B cell (primary cell): ENCODE measurements at regions of chr12 and their contacts with region 1.

Region 1: GRCh38 chr12:110826592-110827200 is 20.1 kb upstream of the CCDC63 start:
- DNase-seq: peak; percentile 90
- ATAC-seq: peak; percentile 99
- H3K4me3 ChIP-seq: peak overlapping the region in 4 of 5 experiments; percentile 9 to 44 (median 28)
- H3K4me3 Mint-ChIP-seq: peak overlapping the region; percentile 72
- H3K27ac ChIP-seq: no peak overlapping the region
- H3K27ac Mint-ChIP-seq: no peak overlapping the region
- H3K4me1 ChIP-seq: peaks cover 6 to 7% of the 10 kb centered on the region in 2 donors
- H3K4me1 Mint-ChIP-seq: peaks cover 6% of the 10 kb centered on the region
- H3K27me3 ChIP-seq: no peaks in the 10 kb centered on the region
- H3K27me3 Mint-ChIP-seq: peaks cover 10% of the 10 kb centered on the region
- CTCF ChIP-seq: peak; percentile 80

Region 2: GRCh38 chr12:110468212-110469048 is 358.3 kb before region 1 on chr12 and contains the starts of genes FAM216A and GPN3:
- CTCF ChIA-PET with region 1: interaction called, 21 read pairs
- POLR2A ChIA-PET with region 1: no interaction called
- intact Hi-C with region 1: loop called (anchors 1 kb)
- DNase-seq: peak; percentile 97
- ATAC-seq: peak; percentile 91
- H3K4me3 ChIP-seq: peak within 1 kb of the TSS; percentile 72 to 100 (median 95)
- H3K4me3 Mint-ChIP-seq: peak within 1 kb of the TSS; percentile 100
- H3K27ac ChIP-seq: peak within 1 kb of the TSS; percentile 69 to 79
- H3K27ac Mint-ChIP-seq: peak within 1 kb of the TSS; percentile 98
- H3K4me1 ChIP-seq: peaks cover 22 to 24% of the 10 kb centered on the region in 2 donors
- H3K4me1 Mint-ChIP-seq: peaks cover 42% of the 10 kb centered on the region
- H3K27me3 ChIP-seq: no peaks in the 10 kb centered on the region
- H3K27me3 Mint-ChIP-seq: no peaks in the 10 kb centered on the region
- CTCF ChIP-seq: no peak
- total RNA-seq, gene FAM216A: 15.4 and 15.7 TPM in 2 replicates
- total RNA-seq, gene GPN3: 12.3 and 13.4 TPM in 2 replicates

Region 3: DNA sequence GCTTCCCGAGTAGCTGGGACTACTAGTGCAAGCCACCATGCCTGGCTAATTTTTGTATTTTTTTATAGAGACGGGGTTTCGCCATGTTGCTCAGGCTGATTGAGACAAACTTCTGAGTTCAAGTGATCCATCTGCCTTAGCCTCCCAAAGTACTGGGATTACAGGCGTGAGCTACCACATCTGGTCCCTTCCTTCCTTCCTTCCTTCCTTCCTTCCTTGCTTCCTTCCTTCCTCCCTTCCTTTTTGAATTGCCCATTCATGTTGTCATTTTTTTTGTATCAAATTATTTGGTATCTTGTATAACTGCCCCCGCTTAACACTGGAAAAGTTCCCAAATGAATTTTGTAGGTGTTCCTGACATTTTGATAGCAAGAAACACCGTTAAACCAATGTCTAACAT is 312.9 kb before region 1 on chr12:
- CTCF ChIA-PET with region 1: interaction called, 12 read pairs
- POLR2A ChIA-PET with region 1: no interaction called
- intact Hi-C with region 1: loop called (anchors 1 kb)
- DNase-seq: no peak
- ATAC-seq: no peak
- H3K4me3 ChIP-seq: no peak overlapping the region
- H3K4me3 Mint-ChIP-seq: no peak overlapping the region
- H3K27ac ChIP-seq: no peak overlapping the region
- H3K27ac Mint-ChIP-seq: no peak overlapping the region
- H3K4me1 ChIP-seq: no peaks in the 10 kb centered on the region
- H3K4me1 Mint-ChIP-seq: no peaks in the 10 kb centered on the region
- H3K27me3 ChIP-seq: no peaks in the 10 kb centered on the region
- H3K27me3 Mint-ChIP-seq: no peaks in the 10 kb centered on the region
- CTCF ChIP-seq: no peak

Region 4: GRCh38 chr12:110555577-110556406 is 270.9 kb before region 1 on chr12:
- CTCF ChIA-PET with region 1: interaction called, 37 read pairs
- POLR2A ChIA-PET with region 1: interaction called, 10 read pairs
- intact Hi-C with region 1: loop called (anchors 1 kb)
- DNase-seq: no peak
- ATAC-seq: no peak
- H3K4me3 ChIP-seq: no peak overlapping the region
- H3K4me3 Mint-ChIP-seq: no peak overlapping the region
- H3K27ac ChIP-seq: no peak overlapping the region
- H3K27ac Mint-ChIP-seq: no peak overlapping the region
- H3K4me1 ChIP-seq: peaks cover 27 to 31% of the 10 kb centered on the region in 2 donors
- H3K4me1 Mint-ChIP-seq: peaks cover 50% of the 10 kb centered on the region
- H3K27me3 ChIP-seq: no peaks in the 10 kb centered on the region
- H3K27me3 Mint-ChIP-seq: no peaks in the 10 kb centered on the region
- CTCF ChIP-seq: no peak

Region 5: GRCh38 chr12:110698171-110698902 is 128.4 kb before region 1 on chr12:
- CTCF ChIA-PET with region 1: interaction called, 5 read pairs
- POLR2A ChIA-PET with region 1: interaction called, 5 read pairs
- intact Hi-C with region 1: loop called (anchors 2 kb)
- DNase-seq: peak; percentile 90
- ATAC-seq: peak; percentile 100
- H3K4me3 ChIP-seq: peak overlapping the region in 2 of 5 experiments; percentile 21 to 29
- H3K4me3 Mint-ChIP-seq: peak overlapping the region; percentile 64
- H3K27ac ChIP-seq: peak overlapping the region in 1 of 2 donors; percentile 58
- H3K27ac Mint-ChIP-seq: peak overlapping the region; percentile 94
- H3K4me1 ChIP-seq: peaks cover 36 to 37% of the 10 kb centered on the region in 2 donors
- H3K4me1 Mint-ChIP-seq: peaks cover 47% of the 10 kb centered on the region
- H3K27me3 ChIP-seq: no peaks in the 10 kb centered on the region
- H3K27me3 Mint-ChIP-seq: no peaks in the 10 kb centered on the region
- CTCF ChIP-seq: peak; percentile 82

Region 6: GRCh38 chr12:110742718-110743570 is 83.8 kb before region 1 on chr12 and contains the start of gene PPP1CC:
- CTCF ChIA-PET with region 1: interaction called, 3 read pairs
- POLR2A ChIA-PET with region 1: no interaction called
- intact Hi-C with region 1: loop called (anchors 1 kb)
- DNase-seq: peak; percentile 97
- ATAC-seq: peak; percentile 95
- H3K4me3 ChIP-seq: peak within 1 kb of the TSS; percentile 86 to 94 (median 92)
- H3K4me3 Mint-ChIP-seq: peak within 1 kb of the TSS; percentile 99
- H3K27ac ChIP-seq: peak within 1 kb of the TSS; percentile 31 to 78
- H3K27ac Mint-ChIP-seq: peak within 1 kb of the TSS; percentile 95
- H3K4me1 ChIP-seq: peaks cover 32 to 36% of the 10 kb centered on the region in 2 donors
- H3K4me1 Mint-ChIP-seq: peaks cover 40% of the 10 kb centered on the region
- H3K27me3 ChIP-seq: no peaks in the 10 kb centered on the region
- H3K27me3 Mint-ChIP-seq: no peaks in the 10 kb centered on the region
- CTCF ChIP-seq: no peak
- total RNA-seq, gene PPP1CC: 146 and 150 TPM in 2 replicates

Region 7: DNA sequence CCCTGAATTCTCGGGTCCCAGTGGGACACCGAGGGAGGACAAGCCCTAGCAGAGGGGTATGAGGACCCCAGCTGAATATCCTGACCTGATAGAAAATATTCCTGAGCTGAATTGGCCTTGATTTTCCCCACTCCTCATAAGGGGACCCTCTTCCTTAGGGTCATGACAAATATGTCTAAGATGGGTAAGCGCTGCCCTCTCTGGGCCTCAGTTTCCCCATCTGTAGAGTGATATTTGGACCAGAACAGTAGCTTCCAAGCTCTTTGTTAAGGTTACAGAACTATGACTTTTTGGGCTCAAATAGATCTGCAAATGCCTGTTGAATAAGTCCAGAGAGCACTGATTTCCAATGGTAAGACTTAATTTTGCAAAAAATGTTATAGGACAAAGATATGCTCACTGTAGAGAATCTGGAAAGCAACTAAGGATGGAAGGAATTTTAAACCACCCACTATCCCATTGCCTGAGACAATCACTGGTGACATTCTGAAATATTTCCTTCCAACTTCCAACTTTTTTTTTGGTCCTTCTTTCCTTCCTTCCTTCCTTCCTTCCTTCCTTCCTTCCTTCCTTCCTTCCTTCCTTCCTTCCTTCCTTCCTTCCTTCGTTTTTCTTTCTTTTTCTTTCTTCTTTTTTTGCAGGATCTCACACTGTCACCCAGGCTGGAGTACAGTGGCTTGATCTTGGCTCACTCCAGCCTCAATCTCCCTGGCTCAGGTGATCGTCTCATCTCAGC is 61.7 kb after region 1 on chr12:
- CTCF ChIA-PET with region 1: interaction called, 3 read pairs
- POLR2A ChIA-PET with region 1: no interaction called
- intact Hi-C with region 1: loop called (anchors 5 kb)
- DNase-seq: no peak
- ATAC-seq: no peak
- H3K4me3 ChIP-seq: peak overlapping the region in 1 of 5 experiments; percentile 62
- H3K4me3 Mint-ChIP-seq: peak overlapping the region; percentile 95
- H3K27ac ChIP-seq: no peak overlapping the region
- H3K27ac Mint-ChIP-seq: peak overlapping the region; percentile 43
- H3K4me1 ChIP-seq: peaks cover 0 to 10% of the 10 kb centered on the region in 2 donors
- H3K4me1 Mint-ChIP-seq: peaks cover 4% of the 10 kb centered on the region
- H3K27me3 ChIP-seq: no peaks in the 10 kb centered on the region
- H3K27me3 Mint-ChIP-seq: no peaks in the 10 kb centered on the region
- CTCF ChIP-seq: peak; percentile 62

Region 8: DNA sequence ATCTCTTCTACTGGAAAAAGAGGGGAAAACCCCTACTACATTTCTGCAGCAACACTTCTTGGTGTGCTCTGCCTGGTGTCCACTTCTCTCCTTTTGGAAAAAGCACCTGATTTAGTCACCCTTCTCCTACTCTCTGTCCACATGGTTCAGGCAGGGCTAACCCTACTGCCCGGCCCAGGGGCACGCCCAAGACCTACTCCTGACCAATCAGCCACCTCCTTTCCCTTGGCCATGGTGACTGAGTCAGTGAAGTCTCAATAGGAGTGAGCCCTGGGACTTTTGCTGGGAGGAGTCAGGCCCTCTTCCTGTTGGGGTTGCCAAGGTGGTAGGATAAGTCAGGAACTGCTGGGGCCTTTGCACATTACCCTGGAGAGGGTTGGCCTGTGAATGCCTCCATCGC is 146.2 kb after region 1 on chr12:
- CTCF ChIA-PET with region 1: no interaction called
- POLR2A ChIA-PET with region 1: no interaction called
- intact Hi-C with region 1: no loop called
- DNase-seq: no peak
- ATAC-seq: no peak
- H3K4me3 ChIP-seq: no peak overlapping the region
- H3K4me3 Mint-ChIP-seq: no peak overlapping the region
- H3K27ac ChIP-seq: no peak overlapping the region
- H3K27ac Mint-ChIP-seq: no peak overlapping the region
- H3K4me1 ChIP-seq: no peaks in the 10 kb centered on the region
- H3K4me1 Mint-ChIP-seq: no peaks in the 10 kb centered on the region
- H3K27me3 ChIP-seq: no peaks in the 10 kb centered on the region
- H3K27me3 Mint-ChIP-seq: peaks cover 13% of the 10 kb centered on the region
- CTCF ChIP-seq: no peak